Calu3 (cell line): ENCODE measurements at regions of chr2 and their contacts with region 1.

Region 1: GRCh38 chr2:15976354-15976753 is 36.0 kb downstream of the MYCN start:
- DNase-seq: peak; percentile 62
- H3K4me3 Mint-ChIP-seq: no peak overlapping the region
- H3K27ac Mint-ChIP-seq: peak overlapping the region; percentile 75
- H3K4me1 Mint-ChIP-seq: peaks cover 47% of the 10 kb centered on the region
- H3K27me3 Mint-ChIP-seq: no peaks in the 10 kb centered on the region
- CTCF ChIP-seq: no peak

Region 2: DNA sequence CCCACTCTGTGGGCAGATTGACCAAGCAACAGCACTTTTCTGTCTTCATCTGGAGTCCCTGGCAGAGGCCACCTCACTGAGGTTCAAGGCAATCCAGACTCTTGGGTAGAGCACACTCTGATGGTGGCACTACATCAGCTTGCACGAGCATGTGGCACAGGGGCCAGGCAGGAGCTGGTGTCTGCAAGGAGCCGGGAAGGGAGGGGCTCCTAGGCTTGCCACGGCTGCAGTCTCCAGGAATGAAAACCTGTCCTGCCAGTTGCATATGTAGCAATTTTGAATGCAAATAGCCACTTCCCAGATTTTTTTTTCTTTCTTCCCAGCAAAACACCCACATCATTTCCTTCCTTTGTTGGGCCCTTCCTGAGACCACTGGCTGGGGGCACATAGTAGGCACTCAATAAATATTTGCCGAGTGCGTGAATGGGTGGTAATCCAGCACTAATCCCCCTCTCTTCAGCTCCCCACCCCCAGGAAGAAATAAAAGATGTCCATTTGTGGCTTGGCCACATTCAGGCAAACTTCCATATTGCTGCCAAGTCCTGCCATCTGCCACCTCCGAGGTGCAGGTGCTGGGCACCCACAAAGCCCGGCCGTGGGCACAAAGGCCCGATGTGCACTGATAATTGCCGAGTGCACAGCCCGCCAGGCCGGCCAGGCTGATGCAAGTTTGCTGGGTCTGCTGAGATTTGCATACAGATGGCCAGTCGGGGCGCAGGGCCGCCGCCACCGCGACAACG is 36.4 kb after region 1 on chr2:
- CTCF ChIA-PET with region 1: interaction called, 3 read pairs
- intact Hi-C with region 1: loop called (anchors 5 kb)
- DNase-seq: peak; percentile 80
- H3K4me3 Mint-ChIP-seq: peak overlapping the region; percentile 33
- H3K27ac Mint-ChIP-seq: peak overlapping the region; percentile 0
- H3K4me1 Mint-ChIP-seq: peaks cover 36% of the 10 kb centered on the region
- H3K27me3 Mint-ChIP-seq: no peaks in the 10 kb centered on the region
- CTCF ChIP-seq: no peak